SK-N-SH (cell line): ENCODE measurements at regions of chr6 and their contacts with region 1.

Region 1: DNA sequence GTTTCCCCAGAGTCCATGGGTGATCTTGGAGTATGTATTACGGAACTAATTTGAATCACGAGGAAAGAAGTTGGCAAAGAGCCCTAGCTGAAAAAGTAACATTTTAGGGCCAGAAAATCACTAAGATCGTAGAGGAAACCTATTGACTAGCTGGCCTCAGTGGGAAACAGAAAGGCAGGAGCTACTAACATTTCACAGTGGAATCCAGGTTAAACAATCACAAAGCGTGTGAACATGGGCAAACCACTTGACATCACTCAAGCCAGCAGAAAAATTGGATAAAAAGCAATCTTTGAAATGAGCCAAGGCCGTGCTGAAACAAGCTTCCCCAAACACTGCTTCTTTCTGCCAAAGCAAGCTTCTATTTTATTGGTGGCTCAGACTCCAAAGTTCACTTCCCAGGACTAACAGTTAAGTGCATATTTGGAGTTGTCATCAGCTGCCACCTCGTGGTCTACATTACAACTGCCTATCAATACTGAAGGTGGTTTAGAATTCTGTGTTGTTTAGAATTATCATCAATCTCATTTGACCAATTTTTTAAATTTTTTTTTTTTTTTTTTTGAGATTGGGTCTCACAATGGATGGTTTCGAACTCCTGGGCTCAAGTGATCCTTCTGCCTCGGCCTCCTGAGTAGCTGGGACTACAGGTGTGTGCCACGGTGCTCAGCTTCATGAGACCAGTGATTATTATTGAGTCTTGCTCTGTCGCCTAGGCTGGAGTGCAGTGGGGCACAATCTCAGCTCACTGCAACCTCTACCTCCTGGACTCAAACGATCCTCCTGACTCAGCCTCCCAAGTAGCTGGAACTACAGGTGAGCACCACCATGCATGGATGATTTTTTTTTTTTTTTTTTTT is 10.6 kb downstream of the RPS10 start:
- DNase-seq: peak; percentile 47
- H3K4me3 ChIP-seq: no peak overlapping the region
- H3K27ac ChIP-seq: 0 out of 4 replicates have a peak overlapping the region, but pooled peaks of 1 of the 2 experiments have one; percentile 1
- H3K4me1 ChIP-seq: no peaks in the 10 kb centered on the region
- H3K27me3 ChIP-seq: no peaks in the 10 kb centered on the region
- CTCF ChIP-seq: peak; percentile 74
- EP300 ChIP-seq: no peak
- RAD21 ChIP-seq: peak; percentile 78

Region 2: DNA sequence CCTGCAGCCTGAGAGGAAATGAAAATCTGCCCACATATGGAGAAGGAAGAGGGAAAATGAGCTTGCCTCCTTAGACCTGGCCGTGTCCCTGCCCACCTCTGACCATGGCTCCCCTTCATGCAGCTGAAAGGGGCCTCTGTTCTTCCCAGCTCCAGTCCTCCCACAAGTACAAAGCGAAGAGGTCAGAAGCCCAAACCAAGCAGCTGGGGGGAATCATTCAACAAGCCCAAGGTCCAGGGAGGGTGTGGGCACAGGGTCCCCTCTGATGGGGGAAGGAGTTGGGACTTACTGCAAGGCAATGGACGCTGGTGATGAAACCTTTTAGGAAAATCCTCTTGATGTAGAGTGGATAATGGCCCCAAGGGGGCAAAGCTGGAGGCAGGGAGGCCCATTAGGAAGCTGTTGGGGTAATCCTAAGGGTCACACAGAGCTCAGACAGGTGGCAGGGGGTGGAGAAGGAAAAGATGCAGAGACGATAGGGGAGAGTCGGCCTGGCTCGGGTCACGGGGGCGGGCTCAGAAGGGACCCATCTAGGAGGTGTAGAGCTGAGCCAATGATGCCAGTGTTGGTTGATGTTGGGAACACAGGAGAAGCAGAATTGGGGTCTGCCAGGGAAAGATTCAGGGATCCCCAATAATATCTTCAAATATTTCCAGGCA is 253.2 kb before region 1 on chr6:
- CTCF ChIA-PET with region 1: interaction called, 13 read pairs
- POLR2A ChIA-PET with region 1: no interaction called
- DNase-seq: peak; percentile 4
- H3K4me3 ChIP-seq: no peak overlapping the region
- H3K27ac ChIP-seq: no peak overlapping the region
- H3K4me1 ChIP-seq: no peaks in the 10 kb centered on the region
- H3K27me3 ChIP-seq: no peaks in the 10 kb centered on the region
- CTCF ChIP-seq: no peak
- EP300 ChIP-seq: no peak
- RAD21 ChIP-seq: no peak

Region 3: DNA sequence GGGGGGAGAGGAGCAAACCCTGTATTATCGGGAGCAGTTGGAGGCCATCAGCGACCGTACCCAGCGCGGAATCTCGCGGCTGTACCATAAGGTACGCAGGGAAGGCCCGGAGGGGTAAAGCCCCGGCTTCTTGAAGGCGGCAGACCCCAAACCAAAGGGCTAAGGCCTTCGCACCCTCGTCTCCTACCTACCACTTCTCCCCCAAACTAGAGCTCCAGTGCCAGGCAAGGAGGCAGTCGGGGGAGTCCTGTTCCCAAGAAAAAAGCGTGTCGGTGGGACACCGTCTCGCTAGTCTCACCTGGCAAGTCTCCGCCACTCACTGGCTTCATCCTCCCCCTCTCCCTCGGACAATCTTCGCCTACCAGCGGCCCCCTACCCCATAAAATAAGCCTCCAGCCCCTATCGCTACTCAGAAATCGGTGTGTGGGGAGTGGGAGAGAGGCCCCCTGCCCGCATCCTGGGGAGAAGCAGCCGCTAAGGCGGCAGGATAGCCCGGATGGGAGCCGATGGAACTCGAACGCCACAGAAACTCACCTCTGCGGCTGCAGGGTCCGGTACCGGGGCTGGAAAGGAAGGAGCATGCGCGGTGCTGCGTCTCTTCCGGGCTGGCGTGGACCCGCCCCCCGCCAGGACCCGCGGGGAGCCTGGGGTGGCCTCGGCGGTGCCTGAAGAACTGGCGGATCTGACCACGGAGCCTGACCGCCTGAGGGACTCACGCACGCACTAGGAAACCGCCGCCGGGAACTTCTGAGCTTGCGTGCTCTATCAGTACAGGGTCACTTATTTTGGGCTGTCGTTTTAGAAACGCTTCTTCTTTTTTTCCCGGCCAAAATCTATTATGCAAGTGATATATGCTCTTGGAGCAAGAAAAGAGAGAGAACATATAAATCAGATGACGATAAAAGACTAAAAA is 10.5 kb after region 1 on chr6 and contains the start of gene RPS10:
- CTCF ChIA-PET with region 1: interaction called, 22 read pairs
- POLR2A ChIA-PET with region 1: interaction called, 9 read pairs
- DNase-seq: peak; percentile 99
- H3K4me3 ChIP-seq: peak within 1 kb of the TSS; percentile 74 to 94
- H3K27ac ChIP-seq: peak within 1 kb of the TSS; percentile 66 to 84
- H3K4me1 ChIP-seq: peaks cover 7 to 20% of the 10 kb centered on the region in 2 experiments; a peak in 3 of 4 replicates
- H3K27me3 ChIP-seq: no peaks in the 10 kb centered on the region
- CTCF ChIP-seq: no peak
- EP300 ChIP-seq: no peak
- RAD21 ChIP-seq: no peak
- polyA plus RNA-seq, gene RPS10: 4,475 and 5,166 TPM in 2 replicates

Region 4: DNA sequence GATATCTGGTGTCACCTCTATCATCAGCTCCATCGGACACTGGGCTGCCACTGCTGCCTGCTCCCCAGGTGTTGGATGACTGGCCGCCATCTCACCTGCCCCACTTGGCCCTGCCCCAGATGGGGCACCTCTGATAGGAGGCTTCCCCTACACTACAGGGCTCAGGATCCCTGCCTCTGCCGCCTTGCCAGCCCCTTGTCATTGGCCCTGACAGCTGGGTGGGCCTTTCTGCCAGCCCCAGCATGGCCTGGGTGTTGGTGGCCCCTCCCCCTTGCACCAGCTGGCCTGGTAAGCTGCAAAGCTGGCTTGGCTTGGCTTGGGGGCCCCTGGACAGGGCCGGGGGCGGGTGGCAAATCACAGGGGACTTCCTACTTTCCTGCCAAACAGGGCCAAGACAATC is 61.2 kb after region 1 on chr6:
- CTCF ChIA-PET with region 1: no interaction called
- POLR2A ChIA-PET with region 1: no interaction called
- DNase-seq: no peak
- H3K4me3 ChIP-seq: no peak overlapping the region
- H3K27ac ChIP-seq: no peak overlapping the region
- H3K4me1 ChIP-seq: peaks cover 0 to 3% of the 10 kb centered on the region in 2 experiments; a peak in 1 of 4 replicates
- H3K27me3 ChIP-seq: no peaks in the 10 kb centered on the region; the same call in 1 of the 2 replicates
- CTCF ChIP-seq: no peak
- EP300 ChIP-seq: no peak
- RAD21 ChIP-seq: no peak